ENCODE measurements at regions of chr7 and their contacts with region 1.

Region 1: DNA sequence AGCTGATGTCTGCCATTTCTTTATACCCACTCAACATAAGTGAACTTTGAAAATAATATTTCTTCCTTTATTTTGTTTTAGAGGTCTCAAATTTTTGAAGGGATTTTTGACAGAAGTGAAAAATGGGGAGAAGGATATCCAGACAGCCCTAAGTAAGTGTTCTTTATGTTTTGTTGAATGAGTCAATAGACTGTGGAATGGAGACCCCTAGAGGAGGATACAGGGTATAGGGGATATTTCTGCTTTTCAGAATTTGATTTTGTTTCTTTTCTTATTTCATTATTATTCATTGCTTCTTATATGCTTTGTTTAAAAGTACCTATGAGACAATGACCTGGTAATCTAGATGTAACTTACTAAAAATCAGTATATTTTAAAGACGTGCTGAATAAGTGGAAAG is 34.4 kb downstream of the PLEKHA8 start:
- DNase-seq: peak; percentile 31
- CTCF ChIP-seq: peak; percentile 69

Region 2: GRCh38 chr7:29764227-29764626 is 298.4 kb before region 1 on chr7:
- in situ Hi-C with region 1: loop called (anchors 25 kb)
- DNase-seq: no peak
- CTCF ChIP-seq: no peak

Region 3: DNA sequence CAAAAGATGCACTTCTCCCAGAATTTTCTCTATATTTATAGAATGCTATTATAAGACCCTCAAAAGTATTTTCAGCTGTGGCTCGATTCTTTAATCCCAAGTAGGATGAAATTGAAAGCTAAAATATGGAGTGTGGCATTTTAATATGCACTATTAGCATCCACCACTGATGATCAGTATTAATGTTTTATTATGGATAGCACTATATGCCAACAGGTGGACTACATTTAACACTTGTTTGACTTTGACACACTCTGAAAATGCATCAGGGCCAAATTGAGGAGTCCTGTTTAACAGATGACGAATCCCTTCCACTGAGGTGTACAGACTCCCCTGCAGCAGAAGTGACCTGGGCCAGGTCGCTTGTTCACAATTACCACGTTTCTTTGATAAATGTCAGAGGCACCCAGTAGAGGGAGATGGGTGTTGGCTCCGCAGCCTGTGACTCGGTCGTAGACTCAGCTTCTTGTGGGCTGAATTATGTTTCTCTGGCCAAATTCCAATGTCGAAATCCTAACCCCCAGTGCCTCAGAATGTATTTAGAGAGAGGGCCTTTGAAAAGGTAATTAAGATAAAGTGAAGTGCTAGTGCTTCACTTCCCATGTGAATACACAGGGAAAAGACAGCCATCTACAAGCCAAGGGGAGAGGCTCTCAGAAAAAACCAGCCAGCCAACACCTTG is 208.2 kb before region 1 on chr7:
- in situ Hi-C with region 1: no loop called
- DNase-seq: no peak
- CTCF ChIP-seq: no peak

Region 4: GRCh38 chr7:29884399-29885272 is 178.0 kb before region 1 on chr7:
- in situ Hi-C with region 1: loop called (anchors 10 kb)
- DNase-seq: no peak
- CTCF ChIP-seq: no peak

Region 5: DNA sequence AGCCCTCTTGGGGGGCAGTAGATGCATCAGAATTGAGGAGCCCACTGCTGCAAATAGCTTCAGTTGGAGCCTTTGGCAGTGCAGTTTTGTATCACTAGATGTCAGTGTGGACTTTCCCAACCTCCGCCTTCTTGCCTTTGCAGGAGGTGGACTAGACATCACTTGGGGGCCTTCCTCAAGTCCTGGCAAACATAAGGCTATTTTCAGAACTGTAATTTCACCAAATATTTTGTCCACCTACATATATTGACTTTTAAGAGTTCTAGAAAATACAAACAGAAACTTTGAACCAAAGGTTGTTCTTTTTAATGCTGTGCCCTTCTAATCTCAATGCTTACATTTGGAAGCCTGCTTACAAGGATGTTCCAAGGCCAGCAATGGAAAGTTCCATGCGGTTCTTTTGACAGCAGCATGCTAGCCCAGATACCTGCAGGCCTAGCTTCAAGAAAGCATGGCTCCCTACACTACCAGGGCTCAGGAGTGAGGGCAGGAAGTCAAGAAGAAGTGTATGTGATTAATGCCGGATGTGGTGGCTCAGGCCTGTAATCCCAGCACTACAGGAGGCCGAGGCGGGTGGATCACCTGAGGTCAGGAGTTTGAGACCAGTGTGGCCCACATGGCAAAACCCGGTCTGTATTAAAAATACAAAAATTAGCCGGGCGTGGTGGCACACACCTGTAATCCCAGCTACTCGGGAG is 213.8 kb after region 1 on chr7:
- in situ Hi-C with region 1: no loop called
- DNase-seq: peak; percentile 32
- CTCF ChIP-seq: peak; percentile 87

Measured in GM13977 (cell line).